BJ (cell line): ENCODE measurements at regions of chr20 and their contacts with region 1.

Region 1: DNA sequence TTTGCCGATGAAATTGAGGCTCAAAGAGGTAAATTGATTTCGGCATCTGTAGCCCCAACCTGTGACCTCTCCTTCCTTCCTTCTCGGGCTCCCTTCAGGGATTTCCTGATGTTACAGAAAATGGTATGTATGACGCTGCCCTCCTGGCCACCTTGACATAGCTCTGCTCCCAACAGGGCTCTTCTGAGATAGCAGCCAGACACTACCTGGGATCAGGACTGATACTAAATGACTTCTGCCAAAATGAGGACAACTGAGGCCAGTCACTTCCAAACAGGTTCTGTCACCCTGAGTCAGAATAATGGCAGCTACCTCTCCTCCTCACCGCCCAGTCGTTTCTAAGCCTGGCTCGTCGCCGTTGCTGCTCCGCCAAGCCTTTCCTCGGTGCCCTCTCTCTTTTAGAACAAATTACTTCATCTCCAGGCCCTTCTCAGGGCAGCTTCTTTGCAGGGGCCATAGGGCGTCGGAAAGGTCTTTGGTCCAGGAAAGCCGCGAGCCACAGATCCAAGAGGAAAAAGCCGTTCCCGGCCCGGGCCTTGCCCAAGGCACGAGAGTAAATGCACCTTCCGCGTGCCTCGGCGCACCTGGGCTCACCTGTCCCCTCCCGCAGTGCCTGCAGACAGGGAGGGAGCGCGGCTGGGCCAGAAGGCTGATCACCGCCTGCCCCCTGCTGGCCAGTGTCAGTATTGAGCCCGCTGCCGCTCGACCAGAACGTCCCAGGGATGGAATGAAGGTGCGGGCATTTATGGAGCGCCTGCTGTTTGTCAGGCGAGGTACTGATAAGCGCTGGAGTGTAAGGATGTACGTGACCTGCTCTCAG is 904 bp upstream of the LPIN3 start:
- DNase-seq: no peak
- H3K4me3 ChIP-seq: peak overlapping the region; percentile 54
- H3K27me3 ChIP-seq: no peaks in the 10 kb centered on the region
- CTCF ChIP-seq: peak; percentile 94

Region 2: GRCh38 chr20:40815156-40816038 is 524.3 kb before region 1 on chr20:
- CTCF ChIA-PET with region 1: no interaction called
- POLR2A ChIA-PET with region 1: interaction called, 15 read pairs
- DNase-seq: no peak
- H3K4me3 ChIP-seq: no peak overlapping the region
- H3K27me3 ChIP-seq: no peaks in the 10 kb centered on the region
- CTCF ChIP-seq: no peak

Region 3: GRCh38 chr20:41119546-41120235 is 220.0 kb before region 1 on chr20:
- CTCF ChIA-PET with region 1: interaction called, 24 read pairs
- POLR2A ChIA-PET with region 1: no interaction called
- DNase-seq: no peak
- H3K4me3 ChIP-seq: no peak overlapping the region
- H3K27me3 ChIP-seq: no peaks in the 10 kb centered on the region
- CTCF ChIP-seq: no peak

Region 4: GRCh38 chr20:41173161-41173721 is 166.5 kb before region 1 on chr20:
- CTCF ChIA-PET with region 1: interaction called, 149 read pairs
- POLR2A ChIA-PET with region 1: no interaction called
- DNase-seq: no peak
- H3K4me3 ChIP-seq: no peak overlapping the region
- H3K27me3 ChIP-seq: no peaks in the 10 kb centered on the region
- CTCF ChIP-seq: peak; percentile 98

Region 5: GRCh38 chr20:41232973-41233926 is 106.5 kb before region 1 on chr20:
- CTCF ChIA-PET with region 1: interaction called, 19 read pairs
- POLR2A ChIA-PET with region 1: no interaction called
- DNase-seq: peak; percentile 81
- H3K4me3 ChIP-seq: no peak overlapping the region
- H3K27me3 ChIP-seq: no peaks in the 10 kb centered on the region
- CTCF ChIP-seq: no peak

Region 6: GRCh38 chr20:41411391-41411847 is 71.7 kb after region 1 on chr20:
- CTCF ChIA-PET with region 1: interaction called, 27 read pairs
- POLR2A ChIA-PET with region 1: no interaction called
- DNase-seq: no peak
- H3K4me3 ChIP-seq: no peak overlapping the region
- H3K27me3 ChIP-seq: no peaks in the 10 kb centered on the region
- CTCF ChIP-seq: peak; percentile 41